ENCODE measurements at regions of chr1 and their contacts with region 1.

Region 1: DNA sequence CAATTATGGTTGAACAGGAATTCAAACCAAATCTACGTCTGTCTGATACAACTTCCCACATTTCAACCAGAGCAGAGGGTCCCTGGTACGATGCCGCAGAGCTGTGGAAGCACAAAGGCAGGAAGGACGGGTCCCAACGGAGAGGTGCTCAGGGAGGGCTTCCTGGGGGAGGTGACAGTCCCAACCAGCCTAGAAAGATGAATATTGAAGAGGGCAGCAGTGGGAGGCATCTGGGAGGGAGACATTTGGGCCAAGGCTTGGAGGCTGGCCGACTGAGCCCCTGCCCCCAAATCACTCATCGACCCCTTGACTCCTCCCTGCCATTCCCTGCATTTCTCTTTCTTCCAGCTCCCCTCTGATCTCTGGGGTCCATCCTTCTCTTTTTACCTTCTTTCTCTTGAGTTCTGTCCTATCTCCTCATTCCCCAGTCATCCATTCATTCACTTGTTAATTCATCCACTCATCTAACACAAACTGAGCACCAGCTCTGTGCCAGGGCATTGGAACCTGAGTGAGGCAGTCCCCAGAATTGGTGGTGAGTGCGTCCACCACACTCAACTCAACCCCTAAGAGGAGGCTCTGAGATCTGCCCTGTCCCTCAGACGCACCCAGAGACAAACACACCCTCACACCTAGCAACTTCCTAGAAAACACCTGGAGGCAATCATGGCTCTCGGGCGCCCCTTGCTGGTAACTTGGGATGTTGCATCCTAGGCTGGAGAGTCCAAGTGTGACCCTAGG is 13.2 kb upstream of the CELA3B start:
- DNase-seq: peak; percentile 92

Region 2: GRCh38 chr1:21861602-21862429 is 101.8 kb before region 1 on chr1:
- intact Hi-C with region 1: loop called in 1 of 2 experiments (anchors 5 kb)
- DNase-seq: no peak

Region 3: DNA sequence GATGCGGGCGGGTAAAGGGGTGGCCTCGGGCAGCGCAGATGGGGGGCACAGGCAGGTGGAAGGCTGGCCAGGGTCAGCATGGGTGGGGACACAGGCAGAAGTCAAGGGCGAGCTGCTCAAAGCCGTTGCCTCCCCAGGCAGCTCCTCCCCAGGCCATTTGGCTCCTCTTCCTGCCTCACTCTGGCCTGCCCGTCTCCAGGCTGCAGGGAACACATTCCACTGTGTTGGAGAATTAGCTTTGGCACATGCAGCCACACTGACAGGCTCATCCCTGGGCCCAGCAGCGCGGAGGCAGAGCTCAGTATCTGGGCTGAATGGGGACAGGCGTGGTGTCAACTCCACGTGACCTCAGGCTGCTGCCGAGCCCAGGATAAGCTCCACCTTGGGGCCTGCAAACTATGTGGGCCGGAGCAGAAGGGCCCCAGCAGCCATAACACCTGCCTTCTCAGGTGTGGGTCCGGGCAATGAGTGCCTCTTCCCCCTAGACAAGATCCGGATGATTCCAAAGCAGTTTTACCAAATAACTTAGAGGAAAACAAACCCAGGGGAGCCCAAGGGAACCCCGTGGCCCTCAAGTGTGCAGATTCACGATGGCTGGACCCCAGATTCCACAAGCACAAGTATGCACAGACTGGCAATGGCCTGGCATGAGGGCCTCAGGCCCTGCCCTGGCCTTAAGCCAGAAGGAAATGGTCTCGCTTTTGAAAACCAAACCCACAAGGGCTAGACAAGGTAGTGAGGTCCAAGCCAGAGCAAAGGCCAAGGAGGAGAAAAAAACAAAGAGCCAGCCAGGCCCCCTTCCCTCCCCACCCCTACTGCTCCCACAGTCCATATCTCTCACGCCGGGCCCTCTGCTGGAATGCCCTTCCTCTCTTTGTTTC is 66.8 kb before region 1 on chr1:
- intact Hi-C with region 1: loop called in 1 of 2 experiments (anchors 5 kb)
- DNase-seq: peak; percentile 94

Region 4: GRCh38 chr1:22025368-22026155 is 61.9 kb after region 1 on chr1:
- intact Hi-C with region 1: no loop called
- DNase-seq: peak; percentile 96

Measured in posterior vena cava (tissue), 2 donors.